ENCODE measurements at regions of chr19 and their contacts with region 1.

Region 1: GRCh38 chr19:46776927-46777911 is 11.2 kb downstream of the SLC1A5 start:
- DNase-seq: peak in 1 of 2 experiments; percentile 55
- ATAC-seq: peak; percentile 31 to 45; a peak in 5 of 6 replicates
- H3K4me3 ChIP-seq: no peak overlapping the region
- H3K27ac ChIP-seq: no peak overlapping the region
- H3K4me1 ChIP-seq: peaks cover 21% of the 10 kb centered on the region
- CTCF ChIP-seq: no peak
- EP300 ChIP-seq: no peak
- POLR2A ChIP-seq: no peak
- RAD21 ChIP-seq: no peak

Region 2: DNA sequence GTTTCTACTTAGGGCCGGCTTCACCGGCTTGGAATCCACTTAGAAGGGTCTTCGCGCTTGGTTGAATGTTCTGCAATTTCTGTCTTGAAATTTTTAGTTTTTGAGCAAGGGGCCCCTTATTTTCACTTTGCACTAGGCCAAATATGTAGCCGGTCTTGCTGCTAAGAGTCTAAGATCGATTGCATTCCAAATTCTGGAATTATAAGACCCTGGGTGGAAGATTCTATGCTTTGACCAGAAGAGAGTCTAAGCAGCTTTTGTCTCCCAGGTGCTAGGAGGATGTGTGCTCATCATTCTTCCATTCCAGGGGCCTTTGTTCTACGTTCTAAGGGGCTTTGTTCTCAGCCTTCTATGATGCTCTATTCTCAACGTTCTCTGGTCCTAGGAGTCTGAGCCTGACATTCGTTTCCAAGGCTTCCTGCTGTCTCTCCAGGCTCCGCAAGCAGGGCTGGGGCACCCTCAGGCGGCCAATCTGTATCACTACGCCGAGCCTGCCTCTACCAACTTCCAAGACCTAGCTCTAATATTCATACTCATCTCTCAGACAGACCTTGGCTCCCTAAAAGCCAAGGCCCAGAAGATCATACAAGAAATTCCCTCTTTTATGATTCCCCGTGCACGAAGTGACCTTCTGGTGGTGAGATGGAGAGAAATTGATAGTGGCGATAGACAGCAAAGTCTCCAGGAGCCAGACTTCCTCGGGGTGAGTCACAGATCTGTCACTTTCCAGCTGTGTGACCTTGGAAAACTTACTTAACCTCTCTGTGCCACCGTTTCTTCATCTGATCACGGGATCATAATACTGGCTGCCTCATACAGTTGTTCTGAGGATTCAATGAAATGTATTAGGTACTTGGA is 115.3 kb before region 1 on chr19:
- CTCF ChIA-PET with region 1: no interaction called
- POLR2A ChIA-PET with region 1: no interaction called
- DNase-seq: peak; percentile 93 to 96
- ATAC-seq: peak; percentile 80 to 84
- H3K4me3 ChIP-seq: peak overlapping the region; percentile 40
- H3K27ac ChIP-seq: peak overlapping the region in 1 of 2 experiments; percentile 38; a peak in 2 of 6 replicates
- H3K4me1 ChIP-seq: peaks cover 20% of the 10 kb centered on the region
- CTCF ChIP-seq: peak; percentile 98
- EP300 ChIP-seq: no peak
- POLR2A ChIP-seq: no peak
- RAD21 ChIP-seq: peak; percentile 98 to 99

Region 3: GRCh38 chr19:46697204-46697960 is 79.8 kb before region 1 on chr19:
- CTCF ChIA-PET with region 1: no interaction called
- POLR2A ChIA-PET with region 1: no interaction called
- DNase-seq: peak; percentile 82 to 84
- ATAC-seq: peak; percentile 86 to 97
- H3K4me3 ChIP-seq: no peak overlapping the region
- H3K27ac ChIP-seq: peak overlapping the region in 1 of 2 experiments; percentile 39; a peak in 1 of 6 replicates
- H3K4me1 ChIP-seq: peaks cover 6% of the 10 kb centered on the region; the same call in 1 of the 3 replicates
- CTCF ChIP-seq: no peak
- EP300 ChIP-seq: no peak
- POLR2A ChIP-seq: no peak
- RAD21 ChIP-seq: no peak

Region 4: GRCh38 chr19:46753420-46754155 is 23.6 kb before region 1 on chr19:
- CTCF ChIA-PET with region 1: interaction called, 47 read pairs
- POLR2A ChIA-PET with region 1: no interaction called
- DNase-seq: peak; percentile 64 to 79
- ATAC-seq: peak; percentile 22 to 45; a peak in 3 of 6 replicates
- H3K4me3 ChIP-seq: no peak overlapping the region
- H3K27ac ChIP-seq: no peak overlapping the region
- H3K4me1 ChIP-seq: peaks cover 4% of the 10 kb centered on the region; the same call in 1 of the 3 replicates
- CTCF ChIP-seq: peak; percentile 65
- EP300 ChIP-seq: no peak
- POLR2A ChIP-seq: no peak
- RAD21 ChIP-seq: peak in 1 of 2 experiments; percentile 46; a peak in 1 of 5 replicates

Region 5: GRCh38 chr19:46766569-46767317 is 10.5 kb before region 1 on chr19:
- CTCF ChIA-PET with region 1: interaction called, 159 read pairs
- POLR2A ChIA-PET with region 1: interaction called, 6 read pairs
- DNase-seq: peak in 1 of 2 experiments; percentile 75
- ATAC-seq: peak; percentile 79 to 84
- H3K4me3 ChIP-seq: no peak overlapping the region
- H3K27ac ChIP-seq: no peak overlapping the region
- H3K4me1 ChIP-seq: peaks cover 21% of the 10 kb centered on the region; the same call in 2 of the 3 replicates
- CTCF ChIP-seq: peak; percentile 87
- EP300 ChIP-seq: no peak
- POLR2A ChIP-seq: no peak
- RAD21 ChIP-seq: peak; percentile 38 to 59; a peak in 4 of 5 replicates

Measured in A549 (cell line).